ENCODE measurements at regions of chr18 and their contacts with region 1.

Region 1: GRCh38 chr18:59823596-59824195 is 76.1 kb upstream of the PMAIP1 start:
- DNase-seq: peak; percentile 85
- H3K4me3 Mint-ChIP-seq: no peak overlapping the region
- H3K27ac Mint-ChIP-seq: no peak overlapping the region
- H3K4me1 Mint-ChIP-seq: no peaks in the 10 kb centered on the region
- H3K27me3 Mint-ChIP-seq: peaks cover 18% of the 10 kb centered on the region

Region 2: DNA sequence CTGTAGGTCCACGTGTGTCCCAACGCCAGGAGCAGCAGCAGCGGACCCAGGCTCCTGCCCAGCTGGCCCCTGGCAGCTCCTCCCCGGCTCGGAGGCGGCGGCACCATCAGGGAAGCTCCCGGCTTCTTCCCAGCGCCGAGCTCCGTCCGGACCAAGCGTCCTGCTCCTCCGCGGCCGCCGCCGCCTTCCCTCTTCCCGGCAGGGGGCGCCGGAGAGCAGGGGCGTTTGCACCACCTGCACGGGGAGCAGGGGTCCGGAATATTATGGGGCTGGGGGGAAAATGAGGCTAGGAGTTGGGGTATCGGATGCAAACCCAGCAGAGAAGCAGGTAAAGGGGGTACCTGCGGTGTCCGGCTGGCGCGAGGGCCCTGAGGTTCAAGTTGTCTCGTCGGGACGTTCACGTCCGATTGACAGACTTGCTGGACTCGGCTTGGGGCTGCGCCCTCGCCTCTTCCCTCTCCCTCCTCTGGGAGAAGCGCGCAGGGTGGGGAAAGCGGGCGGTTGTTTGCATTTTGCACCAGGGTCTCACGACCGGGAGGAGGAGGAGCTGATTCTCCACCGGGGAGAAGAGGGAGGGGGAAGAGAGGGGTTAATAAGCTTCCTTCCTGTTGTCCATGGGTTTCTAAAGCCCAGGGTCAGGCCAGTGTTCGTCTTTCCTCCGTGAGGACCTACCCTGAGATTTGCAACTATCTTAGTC is 126.3 kb before region 1 on chr18 and contains the start of gene CCBE1:
- intact Hi-C with region 1: loop called (anchors 5 kb)
- DNase-seq: peak; percentile 86
- H3K4me3 Mint-ChIP-seq: peak within 1 kb of the TSS; percentile 69
- H3K27ac Mint-ChIP-seq: peak within 1 kb of the TSS; percentile 54
- H3K4me1 Mint-ChIP-seq: peaks cover 9% of the 10 kb centered on the region
- H3K27me3 Mint-ChIP-seq: peaks cover 67% of the 10 kb centered on the region
- total RNA-seq, gene CCBE1: not detected in 2 replicates

Region 3: GRCh38 chr18:59783138-59783537 is 40.6 kb before region 1 on chr18:
- intact Hi-C with region 1: loop called (anchors 2 kb)
- DNase-seq: peak; percentile 61
- H3K4me3 Mint-ChIP-seq: no peak overlapping the region
- H3K27ac Mint-ChIP-seq: no peak overlapping the region
- H3K4me1 Mint-ChIP-seq: no peaks in the 10 kb centered on the region
- H3K27me3 Mint-ChIP-seq: peaks cover 5% of the 10 kb centered on the region

Region 4: GRCh38 chr18:59918320-59918755 is 94.6 kb after region 1 on chr18:
- intact Hi-C with region 1: no loop called
- DNase-seq: no peak
- H3K4me3 Mint-ChIP-seq: peak overlapping the region; percentile 1
- H3K27ac Mint-ChIP-seq: peak overlapping the region; percentile 3
- H3K4me1 Mint-ChIP-seq: peaks cover 21% of the 10 kb centered on the region
- H3K27me3 Mint-ChIP-seq: no peaks in the 10 kb centered on the region

Region 5: GRCh38 chr18:60676815-60677214 is 853.1 kb after region 1 on chr18:
- intact Hi-C with region 1: no loop called
- DNase-seq: no peak
- H3K4me3 Mint-ChIP-seq: no peak overlapping the region
- H3K27ac Mint-ChIP-seq: no peak overlapping the region
- H3K4me1 Mint-ChIP-seq: no peaks in the 10 kb centered on the region
- H3K27me3 Mint-ChIP-seq: no peaks in the 10 kb centered on the region